GM12878 (cell line): ENCODE measurements at regions of chr5 and their contacts with region 1.

Region 1: DNA sequence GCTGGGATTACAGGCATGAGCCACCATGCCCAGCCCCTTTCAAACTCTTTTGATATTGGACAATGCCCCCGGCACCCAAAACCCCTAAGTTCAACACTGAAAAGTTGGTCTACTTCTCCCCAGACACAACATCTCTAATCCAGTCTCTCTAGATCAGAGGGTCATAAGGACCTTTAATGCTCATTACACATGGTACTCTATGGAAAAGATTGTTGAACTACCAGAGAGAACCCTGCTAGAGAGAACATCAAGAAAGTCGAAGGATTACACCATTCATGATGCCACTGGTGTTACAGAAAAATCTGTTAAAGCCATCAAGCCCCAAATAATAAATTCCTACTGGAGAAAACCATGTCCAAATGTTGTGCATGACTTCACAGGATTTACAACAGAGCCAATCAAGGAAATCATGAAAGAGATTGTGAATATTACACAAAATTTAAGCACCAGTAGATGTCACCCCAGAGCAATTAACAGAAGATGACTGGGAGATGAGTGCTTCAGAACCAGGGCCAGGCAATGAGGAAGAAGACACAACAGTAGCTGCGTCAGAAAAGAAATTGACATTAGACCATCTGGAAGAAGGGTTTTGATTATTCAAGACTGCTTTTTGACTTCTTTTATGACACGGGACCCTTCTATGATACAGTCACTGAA is 28.3 kb upstream of the NIPAL4 start:
- DNase-seq: peak; percentile 35
- ATAC-seq: peak; percentile 99
- H3K4me3 ChIP-seq: no peak overlapping the region
- H3K27ac ChIP-seq: no peak overlapping the region
- H3K4me1 ChIP-seq: no peaks in the 10 kb centered on the region
- H3K27me3 ChIP-seq: no peaks in the 10 kb centered on the region
- CTCF ChIP-seq: peak; percentile 47 to 65 (median 56); a peak in 5 of 6 replicates
- EP300 ChIP-seq: no peak
- POLR2A ChIP-seq: no peak
- RAD21 ChIP-seq: peak; percentile 85

Region 2: GRCh38 chr5:157308836-157309465 is 122.7 kb before region 1 on chr5:
- CTCF ChIA-PET with region 1: no interaction called
- POLR2A ChIA-PET with region 1: no interaction called
- RAD21 ChIA-PET with region 1: no interaction called
- SMC1A ChIA-PET with region 1: no interaction called
- in situ Hi-C with region 1: no loop called
- intact Hi-C with region 1: no loop called
- DNase-seq: peak; percentile 27
- ATAC-seq: peak; percentile 69
- H3K4me3 ChIP-seq: no peak overlapping the region
- H3K27ac ChIP-seq: 0 out of 2 replicates have a peak overlapping the region, but pooled peaks have one; percentile 30
- H3K4me1 ChIP-seq: no peaks in the 10 kb centered on the region
- H3K27me3 ChIP-seq: no peaks in the 10 kb centered on the region
- CTCF ChIP-seq: peak in 2 of 3 experiments; percentile 14 to 35; a peak in 3 of 6 replicates
- EP300 ChIP-seq: no peak
- POLR2A ChIP-seq: no peak
- RAD21 ChIP-seq: peak; percentile 55

Region 3: GRCh38 chr5:157415838-157416237 is 15.8 kb before region 1 on chr5:
- CTCF ChIA-PET with region 1: interaction called, 10 read pairs
- POLR2A ChIA-PET with region 1: no interaction called
- RAD21 ChIA-PET with region 1: no interaction called
- SMC1A ChIA-PET with region 1: interaction called, 3 read pairs
- in situ Hi-C with region 1: no loop called
- intact Hi-C with region 1: no loop called
- DNase-seq: no peak
- ATAC-seq: no peak
- H3K4me3 ChIP-seq: no peak overlapping the region
- H3K27ac ChIP-seq: no peak overlapping the region
- H3K4me1 ChIP-seq: no peaks in the 10 kb centered on the region
- H3K27me3 ChIP-seq: no peaks in the 10 kb centered on the region
- CTCF ChIP-seq: no peak
- EP300 ChIP-seq: no peak
- POLR2A ChIP-seq: no peak
- RAD21 ChIP-seq: no peak

Region 4: DNA sequence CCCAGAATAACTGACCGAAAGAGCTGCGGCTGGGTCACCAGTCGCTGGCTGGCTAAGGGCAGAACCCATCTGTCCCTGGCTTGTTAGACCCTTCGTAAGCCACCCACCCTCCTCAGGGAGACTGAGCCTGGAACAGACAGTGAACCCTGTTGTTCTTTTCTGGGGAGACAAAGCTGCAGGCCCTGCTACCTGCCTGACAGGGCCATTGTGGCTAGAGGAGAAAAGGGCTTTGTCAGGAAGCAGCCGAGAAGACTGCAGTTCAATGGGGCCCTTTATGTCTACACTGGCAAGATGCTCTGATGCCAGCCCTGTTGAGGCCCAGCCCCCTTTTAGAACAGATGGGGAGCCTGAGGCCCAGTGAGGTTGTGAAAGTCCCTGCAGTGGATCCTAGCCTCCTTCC is 24.6 kb after region 1 on chr5:
- CTCF ChIA-PET with region 1: interaction called, 248 read pairs
- POLR2A ChIA-PET with region 1: no interaction called
- RAD21 ChIA-PET with region 1: interaction called, 5 read pairs
- SMC1A ChIA-PET with region 1: interaction called, 10 read pairs
- in situ Hi-C with region 1: no loop called
- intact Hi-C with region 1: no loop called
- DNase-seq: no peak
- ATAC-seq: no peak
- H3K4me3 ChIP-seq: no peak overlapping the region
- H3K27ac ChIP-seq: no peak overlapping the region
- H3K4me1 ChIP-seq: 0 out of 2 replicates have a peak, but pooled peaks cover 5% of the 10 kb centered on the region
- H3K27me3 ChIP-seq: no peaks in the 10 kb centered on the region; a peak in 2 of 4 replicates
- CTCF ChIP-seq: no peak
- EP300 ChIP-seq: no peak
- POLR2A ChIP-seq: no peak
- RAD21 ChIP-seq: no peak

Region 5: GRCh38 chr5:157471709-157472108 is 40.0 kb after region 1 on chr5:
- CTCF ChIA-PET with region 1: interaction called, 248 read pairs
- POLR2A ChIA-PET with region 1: interaction called, 3 read pairs
- RAD21 ChIA-PET with region 1: interaction called, 93 read pairs
- SMC1A ChIA-PET with region 1: interaction called, 119 read pairs
- in situ Hi-C with region 1: no loop called
- intact Hi-C with region 1: loop called (anchors 2 kb)
- DNase-seq: no peak
- ATAC-seq: peak; percentile 81
- H3K4me3 ChIP-seq: no peak overlapping the region
- H3K27ac ChIP-seq: no peak overlapping the region
- H3K4me1 ChIP-seq: no peaks in the 10 kb centered on the region
- H3K27me3 ChIP-seq: no peaks in the 10 kb centered on the region
- CTCF ChIP-seq: peak; percentile 48 to 66 (median 62); a peak in 5 of 6 replicates
- EP300 ChIP-seq: no peak
- POLR2A ChIP-seq: no peak
- RAD21 ChIP-seq: peak; percentile 68

Region 6: DNA sequence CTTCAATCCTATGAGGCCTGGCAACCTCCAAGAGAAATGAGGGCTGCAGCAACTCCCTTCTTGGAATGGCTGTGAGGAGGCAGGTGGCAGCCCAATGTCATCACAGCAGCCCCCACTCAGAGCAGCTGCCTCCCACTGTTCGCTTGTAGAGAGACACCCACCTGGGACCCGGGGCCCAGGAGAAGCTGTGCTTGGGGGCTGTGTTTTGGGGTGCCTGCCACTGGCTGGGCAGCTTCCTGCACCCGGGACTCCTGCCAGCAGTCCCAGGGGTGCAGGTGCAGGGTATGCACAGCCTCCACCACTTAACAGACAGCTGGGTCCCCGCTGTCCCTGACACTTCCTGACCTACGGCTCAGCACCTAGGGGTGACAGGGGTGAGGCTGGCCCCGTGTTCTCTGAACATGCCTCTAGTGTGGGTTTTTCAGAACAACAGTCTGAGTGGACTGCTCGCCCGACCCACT is 54.6 kb after region 1 on chr5:
- CTCF ChIA-PET with region 1: interaction called, 46 read pairs
- POLR2A ChIA-PET with region 1: no interaction called
- RAD21 ChIA-PET with region 1: interaction called, 6 read pairs
- SMC1A ChIA-PET with region 1: interaction called, 3 read pairs
- in situ Hi-C with region 1: no loop called
- intact Hi-C with region 1: no loop called
- DNase-seq: no peak
- ATAC-seq: peak; percentile 43
- H3K4me3 ChIP-seq: no peak overlapping the region
- H3K27ac ChIP-seq: peak overlapping the region; percentile 24
- H3K4me1 ChIP-seq: peaks cover 29% of the 10 kb centered on the region
- H3K27me3 ChIP-seq: no peaks in the 10 kb centered on the region
- CTCF ChIP-seq: no peak
- EP300 ChIP-seq: no peak
- POLR2A ChIP-seq: no peak
- RAD21 ChIP-seq: no peak

Region 7: DNA sequence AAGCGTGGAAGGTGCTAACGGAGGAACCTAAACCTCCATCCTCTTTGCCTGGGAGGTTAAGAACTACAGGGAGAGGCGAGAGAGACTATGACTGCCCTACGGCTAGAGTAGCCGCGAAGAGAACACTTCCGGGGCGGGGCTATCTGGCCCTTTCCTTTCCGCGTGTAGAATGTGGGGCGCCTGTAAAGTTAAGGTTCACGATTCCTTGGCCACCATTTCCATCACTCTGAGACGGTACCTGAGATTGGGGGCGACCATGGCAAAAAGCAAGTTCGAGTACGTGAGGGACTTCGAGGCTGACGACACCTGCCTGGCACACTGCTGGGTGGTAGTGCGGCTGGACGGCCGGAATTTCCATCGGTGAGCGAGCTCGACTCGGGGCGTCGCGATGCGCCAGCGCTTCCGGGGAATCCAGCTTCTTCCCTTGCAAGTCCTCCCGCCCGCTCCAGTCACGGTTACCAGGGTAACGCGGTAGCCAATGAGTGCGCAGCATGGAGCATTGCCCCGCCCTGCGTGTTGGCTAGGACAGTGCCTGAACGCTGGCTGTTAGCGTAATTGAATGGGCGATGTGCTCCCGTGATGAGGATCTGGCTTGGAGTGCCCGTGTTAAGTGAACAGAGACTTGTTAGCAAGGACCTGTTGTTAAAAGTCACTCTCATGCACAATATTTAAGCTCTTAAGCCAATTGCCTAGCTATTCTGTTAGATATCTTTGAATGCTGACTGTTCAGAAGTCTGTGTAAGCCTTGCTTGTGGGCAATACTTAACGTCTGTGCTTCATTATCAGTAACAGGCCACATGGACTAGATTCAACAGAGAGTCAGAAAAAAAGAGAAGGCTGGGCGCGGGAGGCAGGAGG is 299.8 kb after region 1 on chr5 and contains the start of gene THG1L:
- CTCF ChIA-PET with region 1: interaction called, 10 read pairs
- POLR2A ChIA-PET with region 1: no interaction called
- RAD21 ChIA-PET with region 1: interaction called, 8 read pairs
- SMC1A ChIA-PET with region 1: interaction called, 5 read pairs
- in situ Hi-C with region 1: no loop called
- intact Hi-C with region 1: no loop called
- DNase-seq: peak; percentile 94
- ATAC-seq: peak; percentile 92
- H3K4me3 ChIP-seq: peak within 1 kb of the TSS; percentile 85
- H3K27ac ChIP-seq: peak within 1 kb of the TSS; percentile 92
- H3K4me1 ChIP-seq: peaks cover 21% of the 10 kb centered on the region
- H3K27me3 ChIP-seq: no peaks in the 10 kb centered on the region
- CTCF ChIP-seq: no peak
- EP300 ChIP-seq: no peak
- POLR2A ChIP-seq: peak; percentile 97
- RAD21 ChIP-seq: no peak
- polyA plus RNA-seq, gene THG1L: 37.2 to 58.0 TPM